Activated CD4-positive, alpha-beta memory T cell treated with anti-CD3 and anti-CD28 coated beads for 36 hours (primary cell): ENCODE measurements at regions of chr18 and their contacts with region 1.

Region 1: DNA sequence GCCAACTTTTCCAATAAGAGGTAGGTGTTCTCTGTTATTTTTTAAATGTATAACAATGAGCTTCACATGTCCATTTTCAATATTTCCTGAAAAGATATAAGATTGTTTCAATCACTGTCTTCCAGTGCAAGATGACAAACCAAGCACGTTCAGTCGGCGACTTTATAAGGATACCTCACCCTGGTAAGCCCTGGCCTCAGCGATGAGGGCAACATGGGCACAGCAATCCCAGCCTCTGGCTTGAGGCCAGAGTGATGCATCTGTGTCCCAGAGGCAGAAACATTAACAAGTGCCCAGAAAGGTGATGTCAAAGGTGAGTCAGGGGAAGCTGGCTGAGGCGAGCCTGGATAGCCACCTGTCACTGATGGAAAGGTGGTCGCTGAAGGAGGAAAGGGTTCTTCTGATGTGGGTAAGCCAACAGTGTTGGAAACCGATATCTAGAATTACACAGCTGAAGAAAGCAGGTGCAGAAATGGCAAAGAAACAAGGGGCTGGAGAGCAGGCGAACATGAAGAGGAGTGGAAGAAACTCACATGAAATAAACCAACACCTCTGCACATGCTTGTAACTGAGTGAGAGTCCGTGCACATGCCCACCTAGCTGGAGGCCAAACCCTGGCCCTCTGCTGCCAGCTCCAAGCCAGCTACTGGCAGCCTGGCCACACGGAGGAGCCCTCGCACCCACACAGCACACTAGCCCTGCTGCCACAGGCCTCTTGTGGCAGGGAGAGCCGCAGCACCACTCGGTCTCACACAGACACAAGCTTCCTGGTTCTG is 65.5 kb downstream of the FBXO15 start:
- DNase-seq: peak; percentile 81
- H3K4me3 Mint-ChIP-seq: peak overlapping the region; percentile 69
- H3K27ac Mint-ChIP-seq: peak overlapping the region; percentile 73
- H3K4me1 Mint-ChIP-seq: peaks cover 14% of the 10 kb centered on the region
- H3K27me3 Mint-ChIP-seq: no peaks in the 10 kb centered on the region

Region 2: DNA sequence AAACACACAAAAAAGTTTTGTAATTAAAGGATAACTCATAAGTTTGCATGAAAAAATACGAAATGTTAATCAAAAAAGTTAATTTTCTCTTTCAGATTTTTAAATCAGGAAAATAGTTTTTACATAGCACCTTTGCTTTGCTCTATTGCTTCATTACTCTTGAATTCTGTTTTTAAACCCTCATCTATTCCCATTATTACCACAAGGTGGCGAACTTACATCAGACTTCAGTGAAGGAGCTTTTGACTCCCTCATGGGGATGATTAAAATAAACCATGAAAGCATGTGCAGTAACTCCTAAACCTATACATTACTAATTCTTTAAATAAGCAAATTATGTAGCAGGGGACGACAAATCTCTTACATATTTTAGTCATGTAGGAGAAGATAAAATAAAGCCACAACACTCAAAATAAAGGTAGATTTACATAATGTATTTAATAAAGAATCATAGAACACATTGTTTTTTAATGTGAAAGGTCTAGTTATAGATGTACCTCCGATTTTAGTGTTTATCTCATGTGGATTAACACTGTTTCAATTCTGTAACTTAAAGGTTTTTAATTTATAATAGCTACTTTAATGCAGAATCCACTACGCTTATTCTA is 1319.5 kb before region 1 on chr18:
- CTCF ChIA-PET with region 1: no interaction called
- POLR2A ChIA-PET with region 1: no interaction called
- intact Hi-C with region 1: loop called (anchors 5 kb)
- DNase-seq: no peak
- H3K4me3 Mint-ChIP-seq: no peak overlapping the region
- H3K27ac Mint-ChIP-seq: no peak overlapping the region
- H3K4me1 Mint-ChIP-seq: no peaks in the 10 kb centered on the region
- H3K27me3 Mint-ChIP-seq: no peaks in the 10 kb centered on the region

Region 3: DNA sequence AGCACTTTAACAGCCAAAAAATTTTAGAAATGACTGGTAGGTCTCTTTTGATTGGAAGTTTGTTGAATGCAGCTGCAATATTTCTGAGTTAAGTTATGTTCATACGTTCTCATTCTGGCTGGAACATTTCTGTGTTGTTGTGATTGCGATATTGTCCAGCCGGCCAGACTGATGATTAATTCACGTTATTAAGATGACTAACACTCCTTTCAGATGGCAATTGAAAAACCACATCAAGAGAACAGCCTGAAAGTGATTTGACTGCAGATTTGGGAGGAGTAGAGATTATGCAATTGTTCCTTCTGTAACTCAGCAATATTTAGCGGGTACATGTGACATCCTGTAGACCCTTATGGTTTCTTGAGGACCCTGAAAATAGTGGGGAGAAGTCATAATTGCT is 68.2 kb before region 1 on chr18:
- CTCF ChIA-PET with region 1: no interaction called
- POLR2A ChIA-PET with region 1: no interaction called
- intact Hi-C with region 1: no loop called
- DNase-seq: no peak
- H3K4me3 Mint-ChIP-seq: no peak overlapping the region
- H3K27ac Mint-ChIP-seq: no peak overlapping the region
- H3K4me1 Mint-ChIP-seq: no peaks in the 10 kb centered on the region
- H3K27me3 Mint-ChIP-seq: peaks cover 4% of the 10 kb centered on the region

Region 4: DNA sequence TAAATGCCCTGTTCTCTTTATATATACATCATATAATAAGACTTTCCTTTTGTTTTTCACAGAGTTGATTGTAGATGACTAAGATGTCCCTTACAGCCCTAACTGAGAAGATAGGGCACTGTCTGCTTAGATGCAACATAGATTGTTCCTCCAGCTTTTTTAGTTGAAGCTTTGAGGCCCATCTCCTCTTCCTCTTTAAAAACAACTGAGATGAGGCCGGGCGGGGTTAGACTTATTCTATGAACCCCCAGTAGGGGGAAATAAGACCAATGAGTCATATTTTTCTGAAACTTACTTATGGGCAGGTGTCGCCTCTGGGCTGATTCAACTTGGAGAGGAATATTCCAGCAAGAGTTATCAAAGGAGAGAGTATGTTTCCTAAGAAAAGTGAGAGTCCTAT is 19.1 kb before region 1 on chr18:
- CTCF ChIA-PET with region 1: interaction called, 16 read pairs
- POLR2A ChIA-PET with region 1: interaction called, 4 read pairs
- intact Hi-C with region 1: loop called (anchors 1 kb)
- DNase-seq: peak; percentile 43
- H3K4me3 Mint-ChIP-seq: no peak overlapping the region
- H3K27ac Mint-ChIP-seq: peak overlapping the region; percentile 38
- H3K4me1 Mint-ChIP-seq: peaks cover 25% of the 10 kb centered on the region
- H3K27me3 Mint-ChIP-seq: peaks cover 5% of the 10 kb centered on the region

Region 5: GRCh38 chr18:74147779-74148542 is 65.8 kb after region 1 on chr18 and contains the starts of genes FBXO15 and TIMM21:
- CTCF ChIA-PET with region 1: no interaction called
- POLR2A ChIA-PET with region 1: no interaction called
- intact Hi-C with region 1: loop called (anchors 1 kb)
- DNase-seq: peak; percentile 97
- H3K4me3 Mint-ChIP-seq: peak within 1 kb of the TSS; percentile 95
- H3K27ac Mint-ChIP-seq: peak within 1 kb of the TSS; percentile 99
- H3K4me1 Mint-ChIP-seq: peaks cover 40% of the 10 kb centered on the region
- H3K27me3 Mint-ChIP-seq: peaks cover 2% of the 10 kb centered on the region
- total RNA-seq, gene FBXO15: 0.67 to 0.75 TPM
- total RNA-seq, gene TIMM21: 37.1 to 38.3 TPM

Region 6: DNA sequence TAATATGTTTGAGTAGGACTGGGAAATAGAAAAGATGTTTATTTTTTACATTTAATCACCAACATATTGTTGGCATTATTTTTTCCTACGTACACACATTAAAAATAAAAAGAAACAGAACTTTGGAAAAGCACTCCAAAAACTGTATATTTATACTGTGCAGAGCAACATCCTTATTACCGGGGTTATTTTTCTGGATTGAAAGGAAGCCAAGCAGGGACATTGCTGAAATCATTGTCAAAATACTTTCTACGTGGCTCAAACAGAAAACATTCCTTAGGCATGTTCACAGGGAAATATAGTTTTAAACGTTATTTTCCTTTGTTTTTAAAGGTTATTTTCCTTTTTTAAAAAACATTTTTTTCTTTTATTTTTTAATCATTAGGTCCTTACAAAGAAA is 1660.4 kb after region 1 on chr18:
- CTCF ChIA-PET with region 1: no interaction called
- POLR2A ChIA-PET with region 1: no interaction called
- intact Hi-C with region 1: loop called (anchors 10 kb)
- DNase-seq: no peak
- H3K4me3 Mint-ChIP-seq: no peak overlapping the region
- H3K27ac Mint-ChIP-seq: no peak overlapping the region
- H3K4me1 Mint-ChIP-seq: no peaks in the 10 kb centered on the region
- H3K27me3 Mint-ChIP-seq: peaks cover 1% of the 10 kb centered on the region